CD8-positive, alpha-beta T cell (primary cell): ENCODE measurements at regions of chr11 and their contacts with region 1.

Region 1: GRCh38 chr11:59753650-59754493 is 1.3 kb upstream of the STX3 start:
- DNase-seq: peak; percentile 65 to 91 (median 85)
- ATAC-seq: peak; percentile 64
- H3K4me3 ChIP-seq: peak overlapping the region; percentile 70 to 97
- H3K4me3 Mint-ChIP-seq: peak overlapping the region; percentile 89
- H3K27ac ChIP-seq: no peak overlapping the region
- H3K27ac Mint-ChIP-seq: no peak overlapping the region
- H3K4me1 ChIP-seq: peaks cover 7% of the 10 kb centered on the region
- H3K4me1 Mint-ChIP-seq: peaks cover 23% of the 10 kb centered on the region
- H3K27me3 ChIP-seq: no peaks in the 10 kb centered on the region
- H3K27me3 Mint-ChIP-seq: peaks cover 9% of the 10 kb centered on the region
- CTCF ChIP-seq: peak; percentile 96

Region 2: DNA sequence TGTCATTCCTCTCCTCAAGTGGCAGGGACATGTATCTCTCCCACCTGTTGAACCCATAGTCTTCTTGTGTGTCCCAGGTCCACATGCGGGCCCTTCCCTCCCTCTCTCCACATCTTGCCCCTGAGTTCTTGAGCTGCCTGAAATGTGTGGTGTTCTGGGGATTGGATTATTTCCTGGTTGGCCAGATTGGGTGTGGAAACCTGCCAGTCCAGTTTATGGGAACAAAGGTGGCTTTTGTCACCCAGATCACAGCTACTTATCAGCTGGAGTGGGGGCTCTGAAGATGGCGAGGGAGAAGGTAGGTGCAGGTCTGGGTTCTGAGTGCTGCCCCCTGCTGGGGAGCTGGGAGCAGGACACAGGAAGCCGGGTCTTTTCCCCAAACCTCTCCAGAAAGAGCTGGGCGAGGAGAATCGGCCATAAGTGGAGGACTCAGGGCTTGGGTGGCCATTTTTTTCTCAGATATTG is 567.7 kb before region 1 on chr11:
- CTCF ChIA-PET with region 1: no interaction called
- POLR2A ChIA-PET with region 1: no interaction called
- intact Hi-C with region 1: loop called in 1 of 2 experiments (anchors 2 kb)
- DNase-seq: peak in 8 of 9 experiments; percentile 19 to 68 (median 56)
- ATAC-seq: peak; percentile 78
- H3K4me3 ChIP-seq: no peak overlapping the region
- H3K4me3 Mint-ChIP-seq: no peak overlapping the region
- H3K27ac ChIP-seq: no peak overlapping the region
- H3K27ac Mint-ChIP-seq: no peak overlapping the region
- H3K4me1 ChIP-seq: no peaks in the 10 kb centered on the region
- H3K4me1 Mint-ChIP-seq: peaks cover 2% of the 10 kb centered on the region
- H3K27me3 ChIP-seq: no peaks in the 10 kb centered on the region
- H3K27me3 Mint-ChIP-seq: peaks cover 3% of the 10 kb centered on the region
- CTCF ChIP-seq: peak; percentile 65

Region 3: GRCh38 chr11:59560702-59561469 is 193.0 kb before region 1 on chr11:
- CTCF ChIA-PET with region 1: no interaction called
- POLR2A ChIA-PET with region 1: no interaction called
- intact Hi-C with region 1: loop called in 1 of 2 experiments (anchors 2 kb)
- DNase-seq: peak; percentile 64 to 91 (median 82)
- ATAC-seq: peak; percentile 74
- H3K4me3 ChIP-seq: peak overlapping the region; percentile 73 to 80
- H3K4me3 Mint-ChIP-seq: peak overlapping the region; percentile 96
- H3K27ac ChIP-seq: peak overlapping the region; percentile 53 to 60
- H3K27ac Mint-ChIP-seq: peak overlapping the region; percentile 94
- H3K4me1 ChIP-seq: peaks cover 20% of the 10 kb centered on the region
- H3K4me1 Mint-ChIP-seq: peaks cover 35% of the 10 kb centered on the region
- H3K27me3 ChIP-seq: no peaks in the 10 kb centered on the region
- H3K27me3 Mint-ChIP-seq: no peaks in the 10 kb centered on the region
- CTCF ChIP-seq: no peak

Region 4: GRCh38 chr11:59668950-59669610 is 84.8 kb before region 1 on chr11 and contains the start of gene PATL1:
- CTCF ChIA-PET with region 1: interaction called, 5 read pairs
- POLR2A ChIA-PET with region 1: interaction called, 9 read pairs
- intact Hi-C with region 1: loop called (anchors 1 kb)
- DNase-seq: peak; percentile 98 to 100 (median 99)
- ATAC-seq: peak; percentile 88
- H3K4me3 ChIP-seq: peak within 1 kb of the TSS; percentile 79 to 98
- H3K4me3 Mint-ChIP-seq: peak within 1 kb of the TSS; percentile 98
- H3K27ac ChIP-seq: peak within 1 kb of the TSS; percentile 98 to 99
- H3K27ac Mint-ChIP-seq: peak within 1 kb of the TSS; percentile 100
- H3K4me1 ChIP-seq: peaks cover 22% of the 10 kb centered on the region
- H3K4me1 Mint-ChIP-seq: peaks cover 43% of the 10 kb centered on the region
- H3K27me3 ChIP-seq: no peaks in the 10 kb centered on the region
- H3K27me3 Mint-ChIP-seq: no peaks in the 10 kb centered on the region
- CTCF ChIP-seq: no peak
- total RNA-seq, gene PATL1: 59.5 to 59.6 TPM

Region 5: GRCh38 chr11:59791639-59792038 is 37.8 kb after region 1 on chr11:
- CTCF ChIA-PET with region 1: interaction called, 25 read pairs
- POLR2A ChIA-PET with region 1: no interaction called
- intact Hi-C with region 1: no loop called
- DNase-seq: no peak
- ATAC-seq: no peak
- H3K4me3 ChIP-seq: no peak overlapping the region
- H3K4me3 Mint-ChIP-seq: no peak overlapping the region
- H3K27ac ChIP-seq: no peak overlapping the region
- H3K27ac Mint-ChIP-seq: no peak overlapping the region
- H3K4me1 ChIP-seq: no peaks in the 10 kb centered on the region
- H3K4me1 Mint-ChIP-seq: no peaks in the 10 kb centered on the region
- H3K27me3 ChIP-seq: no peaks in the 10 kb centered on the region
- H3K27me3 Mint-ChIP-seq: no peaks in the 10 kb centered on the region
- CTCF ChIP-seq: no peak

Region 6: DNA sequence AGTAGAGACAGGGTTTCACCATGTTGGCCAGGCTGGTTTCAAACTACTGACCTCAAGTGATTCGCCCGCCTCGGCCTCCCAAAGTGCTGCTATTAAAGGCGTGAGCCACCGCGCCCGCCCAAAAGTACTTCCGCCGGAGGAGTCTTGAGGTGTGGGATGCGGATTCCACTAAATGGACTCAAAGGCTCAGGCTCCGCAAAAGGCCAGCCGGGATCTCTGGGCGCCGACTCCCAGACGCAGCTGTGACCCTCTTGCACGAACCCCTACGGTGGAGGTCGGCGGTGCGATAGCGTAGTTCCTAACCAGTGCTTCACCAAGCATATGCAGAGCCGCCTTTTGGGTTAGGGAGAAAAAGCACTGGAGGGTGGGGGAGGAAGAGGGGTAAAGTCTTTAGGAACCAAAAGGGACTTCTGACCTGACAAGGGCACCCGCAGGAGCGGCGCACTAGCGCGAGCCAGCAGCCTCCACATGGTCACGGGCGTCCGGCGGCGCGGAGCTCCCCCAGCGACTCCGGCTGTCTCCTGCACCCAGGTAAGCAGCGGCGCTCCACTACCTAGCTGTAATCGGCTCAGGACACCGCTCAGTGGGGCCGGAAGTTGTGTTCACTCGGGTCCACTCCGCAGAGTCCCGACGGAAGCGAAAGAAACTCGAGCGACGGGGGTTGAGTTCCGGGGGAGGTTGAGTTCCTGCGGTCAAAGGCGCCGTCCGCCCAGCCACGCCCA is 56.5 kb after region 1 on chr11 and contains the start of gene MRPL16:
- CTCF ChIA-PET with region 1: interaction called, 177 read pairs
- POLR2A ChIA-PET with region 1: interaction called, 14 read pairs
- intact Hi-C with region 1: loop called (anchors 1 to 2 kb)
- DNase-seq: peak; percentile 81 to 95 (median 91)
- ATAC-seq: peak; percentile 99
- H3K4me3 ChIP-seq: peak within 1 kb of the TSS; percentile 97 to 99
- H3K4me3 Mint-ChIP-seq: peak within 1 kb of the TSS; percentile 91
- H3K27ac ChIP-seq: peak within 1 kb of the TSS; percentile 73 to 87
- H3K27ac Mint-ChIP-seq: peak within 1 kb of the TSS; percentile 89
- H3K4me1 ChIP-seq: peaks cover 18% of the 10 kb centered on the region
- H3K4me1 Mint-ChIP-seq: peaks cover 23% of the 10 kb centered on the region
- H3K27me3 ChIP-seq: no peaks in the 10 kb centered on the region
- H3K27me3 Mint-ChIP-seq: peaks cover 4% of the 10 kb centered on the region
- CTCF ChIP-seq: peak; percentile 35
- total RNA-seq, gene MRPL16: 26.5 to 27.8 TPM